ENCODE measurements at regions of chr1 and their contacts with region 1.

Region 1: DNA sequence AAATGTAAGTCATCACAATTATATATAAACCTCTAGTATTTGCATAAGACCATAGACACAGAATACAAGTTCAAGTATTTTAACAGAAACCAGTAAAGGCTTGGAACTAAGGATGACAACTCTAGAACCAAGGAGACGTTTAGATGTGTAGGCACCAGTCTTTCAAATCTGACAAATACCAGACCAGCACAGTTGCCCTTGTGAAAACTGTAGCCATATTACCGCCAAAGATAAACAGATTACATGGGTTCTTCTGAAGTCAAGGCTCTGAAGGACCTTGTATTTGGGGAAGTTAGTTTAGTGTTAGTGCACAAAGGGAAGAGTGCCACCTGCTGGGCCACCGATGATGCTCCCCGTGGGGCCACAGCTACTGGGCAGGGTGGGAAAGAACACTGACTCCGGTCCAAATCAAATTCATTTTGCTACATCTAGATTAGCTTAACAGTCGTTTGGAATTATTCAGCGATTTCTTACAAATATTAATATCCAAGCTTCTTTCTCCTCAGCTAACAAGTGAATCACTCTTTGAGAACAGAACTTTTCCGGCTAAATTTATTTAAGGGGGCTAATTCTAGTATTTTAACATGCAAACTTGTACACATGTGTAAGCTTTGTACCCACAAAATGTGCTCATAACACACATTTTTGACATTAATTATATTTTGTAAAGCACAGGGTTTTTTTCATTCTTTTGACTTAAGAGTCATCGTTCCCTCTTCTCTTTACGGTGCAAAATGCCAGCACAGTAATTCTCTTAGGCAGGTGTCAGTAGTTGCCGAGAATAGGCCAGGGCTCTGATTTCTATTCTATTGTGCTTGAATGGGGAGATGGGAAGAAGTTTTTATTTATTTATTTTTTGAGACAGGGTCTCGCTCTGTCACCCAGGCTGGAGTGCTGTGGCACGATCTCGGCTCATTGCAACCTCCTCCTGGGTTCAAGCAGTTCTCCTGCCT is 8.0 kb upstream of the NIBAN1 start:
- DNase-seq: peak; percentile 80
- ATAC-seq: peak; percentile 98
- H3K4me3 ChIP-seq: no peak overlapping the region
- H3K4me3 Mint-ChIP-seq: no peak overlapping the region
- H3K27ac ChIP-seq: no peak overlapping the region
- H3K27ac Mint-ChIP-seq: no peak overlapping the region
- H3K4me1 ChIP-seq: peaks cover 0 to 3% of the 10 kb centered on the region in 2 donors
- H3K4me1 Mint-ChIP-seq: peaks cover 2% of the 10 kb centered on the region
- H3K27me3 ChIP-seq: no peaks in the 10 kb centered on the region
- H3K27me3 Mint-ChIP-seq: peaks cover 11% of the 10 kb centered on the region
- CTCF ChIP-seq: peak; percentile 93

Region 2: DNA sequence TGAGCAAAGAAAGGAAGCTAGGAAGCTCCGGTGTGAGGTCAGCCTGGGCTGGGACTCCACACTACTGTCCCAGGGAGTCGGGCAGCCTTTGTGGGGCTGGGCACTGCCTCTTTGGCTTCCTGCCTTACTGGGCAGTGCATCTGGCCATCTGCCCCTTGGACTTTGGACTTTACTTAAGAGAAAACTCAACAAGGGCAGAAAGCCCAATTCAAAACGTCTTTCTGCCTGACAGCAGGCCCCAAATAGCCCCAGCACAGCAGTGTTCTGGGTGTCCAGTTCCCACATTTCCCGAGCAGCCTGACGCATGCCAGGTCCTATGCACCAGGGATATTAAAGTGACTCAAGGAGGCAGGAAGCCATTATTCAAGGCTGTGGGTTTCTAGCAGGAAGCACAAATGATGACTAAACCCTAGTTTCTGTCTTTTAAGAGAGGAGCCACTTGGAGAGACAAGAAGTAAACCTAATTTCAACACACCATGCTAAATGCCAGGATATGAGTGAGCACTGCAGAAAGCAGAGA is 189.8 kb before region 1 on chr1:
- CTCF ChIA-PET with region 1: interaction called, 21 read pairs
- POLR2A ChIA-PET with region 1: no interaction called
- intact Hi-C with region 1: no loop called
- DNase-seq: no peak
- ATAC-seq: no peak
- H3K4me3 ChIP-seq: no peak overlapping the region
- H3K4me3 Mint-ChIP-seq: no peak overlapping the region
- H3K27ac ChIP-seq: no peak overlapping the region
- H3K27ac Mint-ChIP-seq: no peak overlapping the region
- H3K4me1 ChIP-seq: no peaks in the 10 kb centered on the region
- H3K4me1 Mint-ChIP-seq: no peaks in the 10 kb centered on the region
- H3K27me3 ChIP-seq: no peaks in the 10 kb centered on the region
- H3K27me3 Mint-ChIP-seq: no peaks in the 10 kb centered on the region
- CTCF ChIP-seq: no peak

Region 3: GRCh38 chr1:184823080-184823479 is 159.2 kb before region 1 on chr1:
- CTCF ChIA-PET with region 1: interaction called, 10 read pairs
- POLR2A ChIA-PET with region 1: interaction called, 8 read pairs
- intact Hi-C with region 1: no loop called
- DNase-seq: no peak
- ATAC-seq: no peak
- H3K4me3 ChIP-seq: no peak overlapping the region
- H3K4me3 Mint-ChIP-seq: no peak overlapping the region
- H3K27ac ChIP-seq: no peak overlapping the region
- H3K27ac Mint-ChIP-seq: no peak overlapping the region
- H3K4me1 ChIP-seq: peaks cover 0 to 5% of the 10 kb centered on the region in 2 donors
- H3K4me1 Mint-ChIP-seq: peaks cover 14% of the 10 kb centered on the region
- H3K27me3 ChIP-seq: no peaks in the 10 kb centered on the region
- H3K27me3 Mint-ChIP-seq: no peaks in the 10 kb centered on the region
- CTCF ChIP-seq: no peak

Region 4: DNA sequence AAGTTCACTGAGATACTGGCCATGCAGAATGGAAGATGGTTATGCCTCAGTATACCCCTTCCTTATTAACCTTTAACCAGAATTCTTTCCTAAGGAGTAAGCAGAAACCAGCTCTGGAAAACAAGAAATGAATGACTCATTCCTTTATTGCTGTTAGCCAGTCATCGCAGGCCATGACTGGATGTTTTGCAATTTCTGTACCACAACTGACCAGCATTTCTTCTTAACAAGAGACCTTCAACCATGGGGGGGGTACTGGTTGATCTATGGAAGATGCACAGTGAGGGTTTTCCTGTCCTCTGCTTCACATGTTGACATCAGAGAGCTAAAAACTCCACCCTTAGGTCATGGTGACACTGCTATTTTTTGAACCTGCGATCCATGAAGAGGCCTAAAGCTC is 35.0 kb after region 1 on chr1:
- CTCF ChIA-PET with region 1: no interaction called
- POLR2A ChIA-PET with region 1: no interaction called
- intact Hi-C with region 1: no loop called
- DNase-seq: no peak
- ATAC-seq: no peak
- H3K4me3 ChIP-seq: no peak overlapping the region
- H3K4me3 Mint-ChIP-seq: no peak overlapping the region
- H3K27ac ChIP-seq: no peak overlapping the region
- H3K27ac Mint-ChIP-seq: no peak overlapping the region
- H3K4me1 ChIP-seq: no peaks in the 10 kb centered on the region
- H3K4me1 Mint-ChIP-seq: peaks cover 4% of the 10 kb centered on the region
- H3K27me3 ChIP-seq: no peaks in the 10 kb centered on the region
- H3K27me3 Mint-ChIP-seq: peaks cover 3% of the 10 kb centered on the region
- CTCF ChIP-seq: no peak

Region 5: DNA sequence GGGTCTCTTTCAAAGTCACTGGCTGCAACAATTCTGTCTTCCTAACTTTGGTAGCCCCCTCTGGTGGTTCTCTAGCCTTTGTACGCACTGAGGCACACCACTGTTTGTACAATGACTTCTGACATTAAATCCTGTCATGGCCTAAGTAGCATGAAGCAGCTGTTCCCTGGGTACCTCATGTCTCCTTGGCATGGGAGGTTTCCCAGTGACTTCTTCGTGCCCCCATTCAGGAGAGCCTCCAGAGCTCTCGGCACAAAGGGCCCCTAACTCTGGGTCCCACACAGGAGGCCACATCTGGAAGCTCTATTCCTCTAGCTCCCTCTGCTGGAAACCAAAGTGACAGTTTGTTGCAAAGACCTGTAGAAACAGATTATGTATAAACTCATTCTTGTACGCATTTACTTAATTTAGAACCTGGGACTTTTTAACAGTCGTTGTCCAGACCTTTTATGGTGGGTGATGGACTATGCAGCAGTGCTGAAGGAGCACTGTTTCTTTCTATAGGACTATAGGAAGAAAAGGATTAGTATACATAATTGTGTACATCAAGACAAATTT is 188.1 kb after region 1 on chr1:
- CTCF ChIA-PET with region 1: interaction called, 11 read pairs
- POLR2A ChIA-PET with region 1: no interaction called
- intact Hi-C with region 1: loop called (anchors 1 kb)
- DNase-seq: peak; percentile 79
- ATAC-seq: peak; percentile 81
- H3K4me3 ChIP-seq: no peak overlapping the region
- H3K4me3 Mint-ChIP-seq: no peak overlapping the region
- H3K27ac ChIP-seq: peak overlapping the region in 1 of 2 donors; percentile 3
- H3K27ac Mint-ChIP-seq: no peak overlapping the region
- H3K4me1 ChIP-seq: peaks cover 0 to 6% of the 10 kb centered on the region in 2 donors
- H3K4me1 Mint-ChIP-seq: peaks cover 4% of the 10 kb centered on the region
- H3K27me3 ChIP-seq: no peaks in the 10 kb centered on the region
- H3K27me3 Mint-ChIP-seq: no peaks in the 10 kb centered on the region
- CTCF ChIP-seq: peak; percentile 84

Measured in B cell (primary cell).